Activated T-helper 1 cell treated with anti-CD3 and anti-CD28 coated beads, Interleukin-12 subunit alpha, Interleukin-12 subunit beta, Interleukin-2, Interleukin-4 antibody, amounts not matched to agents 30 ng/mL and 10 ng/mL and 1 ng/mL, durations not matched to agents 14 hours and 24 hours and 36 hours (primary cell): ENCODE measurements at regions of chr4 and their contacts with region 1.

Region 1: DNA sequence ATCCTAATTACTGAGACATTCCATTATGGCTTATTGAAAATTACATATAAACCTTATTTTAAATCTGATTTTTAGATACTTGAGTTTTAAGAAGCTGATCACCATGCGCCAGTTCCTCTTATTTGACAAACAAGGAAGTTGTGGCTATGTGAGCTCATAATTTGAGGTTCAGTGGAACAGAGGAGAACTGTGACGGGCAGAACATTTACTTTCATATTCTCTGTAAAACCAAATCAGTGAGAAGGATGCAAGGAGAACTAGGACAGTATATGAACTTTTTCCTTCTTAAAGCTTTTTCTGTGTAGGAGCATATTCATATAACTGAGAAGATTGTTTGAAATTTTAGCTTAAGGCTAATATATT is 25.3 kb downstream of the STIM2 start:
- DNase-seq: peak; percentile 43
- H3K4me3 Mint-ChIP-seq: peak overlapping the region; percentile 69
- H3K27ac Mint-ChIP-seq: peak overlapping the region; percentile 91
- H3K4me1 Mint-ChIP-seq: peaks cover 77% of the 10 kb centered on the region
- H3K27me3 Mint-ChIP-seq: no peaks in the 10 kb centered on the region

Region 2: GRCh38 chr4:26839534-26839951 is 46.4 kb before region 1 on chr4:
- intact Hi-C with region 1: no loop called
- DNase-seq: no peak
- H3K4me3 Mint-ChIP-seq: no peak overlapping the region
- H3K27ac Mint-ChIP-seq: no peak overlapping the region
- H3K4me1 Mint-ChIP-seq: no peaks in the 10 kb centered on the region
- H3K27me3 Mint-ChIP-seq: no peaks in the 10 kb centered on the region

Region 3: GRCh38 chr4:26873391-26874026 is 12.4 kb before region 1 on chr4:
- intact Hi-C with region 1: loop called (anchors 1 kb)
- DNase-seq: peak; percentile 62
- H3K4me3 Mint-ChIP-seq: peak overlapping the region; percentile 61
- H3K27ac Mint-ChIP-seq: peak overlapping the region; percentile 86
- H3K4me1 Mint-ChIP-seq: peaks cover 77% of the 10 kb centered on the region
- H3K27me3 Mint-ChIP-seq: no peaks in the 10 kb centered on the region

Region 4: DNA sequence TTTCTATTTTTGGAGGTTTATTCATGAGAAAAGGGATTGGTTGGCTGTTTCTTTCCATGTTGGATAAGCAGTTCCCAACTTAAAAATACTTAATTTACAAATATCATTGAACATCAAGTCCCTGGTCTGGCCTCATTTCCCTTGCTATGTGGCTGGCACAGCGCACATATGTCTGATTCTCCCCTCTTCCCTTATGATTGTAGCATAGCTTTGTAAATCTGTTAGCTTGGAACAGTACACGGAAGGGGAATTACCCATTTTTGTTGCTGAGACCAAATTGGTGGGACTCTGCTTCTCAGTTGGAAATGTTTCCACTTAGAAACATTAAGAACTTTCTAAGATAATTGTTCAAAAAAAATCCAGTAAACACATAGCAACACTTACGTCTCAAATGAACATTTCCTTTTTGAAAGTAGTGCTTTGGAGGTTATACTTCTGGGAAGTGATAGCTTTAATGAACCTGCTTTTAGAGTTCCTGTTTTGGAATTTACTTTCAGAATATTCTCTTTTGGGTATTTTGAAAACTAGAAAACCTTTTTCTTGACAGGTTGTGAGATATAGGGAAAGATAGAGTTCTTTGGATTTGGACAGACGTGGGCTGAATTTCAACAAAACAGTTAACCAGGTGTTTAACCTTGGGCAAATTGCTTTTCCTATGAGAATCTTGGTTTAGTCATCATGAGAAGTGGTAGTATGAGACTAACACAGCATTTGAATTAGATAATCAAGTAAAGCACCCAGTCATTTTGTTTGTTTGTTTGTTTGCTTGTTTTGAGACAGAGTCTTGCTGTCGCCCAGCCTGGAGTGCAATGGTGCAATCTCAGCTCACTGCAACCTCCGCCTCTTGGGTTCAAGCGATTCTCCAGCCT is 22.1 kb after region 1 on chr4:
- intact Hi-C with region 1: loop called (anchors 1 kb)
- DNase-seq: no peak
- H3K4me3 Mint-ChIP-seq: peak overlapping the region; percentile 59
- H3K27ac Mint-ChIP-seq: peak overlapping the region; percentile 85
- H3K4me1 Mint-ChIP-seq: peaks cover 76% of the 10 kb centered on the region
- H3K27me3 Mint-ChIP-seq: no peaks in the 10 kb centered on the region

Region 5: GRCh38 chr4:26985873-26986272 is 100.0 kb after region 1 on chr4:
- intact Hi-C with region 1: loop called (anchors 2 kb)
- DNase-seq: peak; percentile 44
- H3K4me3 Mint-ChIP-seq: peak overlapping the region; percentile 35
- H3K27ac Mint-ChIP-seq: no peak overlapping the region
- H3K4me1 Mint-ChIP-seq: peaks cover 44% of the 10 kb centered on the region
- H3K27me3 Mint-ChIP-seq: no peaks in the 10 kb centered on the region

Region 6: DNA sequence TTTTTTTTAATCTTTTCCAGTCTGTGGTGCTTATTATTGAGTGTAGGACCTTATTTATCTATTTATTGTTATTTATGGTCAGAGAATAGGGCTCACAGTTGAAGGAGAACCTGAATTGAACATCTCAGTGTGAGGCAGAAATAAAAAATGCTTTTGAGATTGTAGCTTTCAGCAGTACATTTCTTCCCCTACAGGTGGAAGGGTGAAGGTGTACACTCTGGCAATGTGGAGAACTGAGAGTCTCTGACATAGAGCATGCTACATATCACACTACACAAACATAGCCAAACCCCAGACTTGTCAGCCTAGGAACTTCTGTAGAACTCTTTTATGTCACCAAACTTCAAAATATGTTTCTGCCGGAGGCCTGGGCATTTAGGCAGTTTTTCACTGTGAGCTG is 114.9 kb after region 1 on chr4:
- intact Hi-C with region 1: loop called (anchors 1 kb)
- DNase-seq: no peak
- H3K4me3 Mint-ChIP-seq: no peak overlapping the region
- H3K27ac Mint-ChIP-seq: no peak overlapping the region
- H3K4me1 Mint-ChIP-seq: peaks cover 48% of the 10 kb centered on the region
- H3K27me3 Mint-ChIP-seq: no peaks in the 10 kb centered on the region